CD4-positive, alpha-beta T cell (primary cell): ENCODE measurements at regions of chr1 and their contacts with region 1.

Region 1: GRCh38 chr1:207863893-207864535 is 46.9 kb downstream of the CD34 start:
- DNase-seq: peak in 12 of 14 experiments; percentile 37 to 78 (median 44)
- ATAC-seq: peak; percentile 55
- H3K4me3 ChIP-seq: no peak overlapping the region
- H3K4me3 Mint-ChIP-seq: peak overlapping the region; percentile 95
- H3K27ac ChIP-seq: peak overlapping the region; percentile 13 to 47
- H3K27ac Mint-ChIP-seq: peak overlapping the region; percentile 95
- H3K4me1 ChIP-seq: peaks cover 75% of the 10 kb centered on the region
- H3K4me1 Mint-ChIP-seq: peaks cover 67% of the 10 kb centered on the region
- H3K27me3 ChIP-seq: no peaks in the 10 kb centered on the region
- H3K27me3 Mint-ChIP-seq: no peaks in the 10 kb centered on the region
- CTCF ChIP-seq: no peak

Region 2: GRCh38 chr1:207787776-207788175 is 76.2 kb before region 1 on chr1:
- CTCF ChIA-PET with region 1: no interaction called
- POLR2A ChIA-PET with region 1: no interaction called
- intact Hi-C with region 1: no loop called
- DNase-seq: no peak
- ATAC-seq: no peak
- H3K4me3 ChIP-seq: no peak overlapping the region
- H3K4me3 Mint-ChIP-seq: no peak overlapping the region
- H3K27ac ChIP-seq: no peak overlapping the region
- H3K27ac Mint-ChIP-seq: no peak overlapping the region
- H3K4me1 ChIP-seq: no peaks in the 10 kb centered on the region
- H3K4me1 Mint-ChIP-seq: no peaks in the 10 kb centered on the region
- H3K27me3 ChIP-seq: no peaks in the 10 kb centered on the region
- H3K27me3 Mint-ChIP-seq: no peaks in the 10 kb centered on the region
- CTCF ChIP-seq: no peak

Region 3: GRCh38 chr1:207848234-207848633 is 15.8 kb before region 1 on chr1:
- CTCF ChIA-PET with region 1: interaction called, 21 read pairs
- POLR2A ChIA-PET with region 1: interaction called, 6 read pairs
- intact Hi-C with region 1: loop called in 1 of 2 experiments (anchors 2 kb)
- DNase-seq: peak in 4 of 14 experiments; percentile 49 to 75 (median 62)
- ATAC-seq: peak; percentile 63
- H3K4me3 ChIP-seq: no peak overlapping the region
- H3K4me3 Mint-ChIP-seq: peak overlapping the region; percentile 42
- H3K27ac ChIP-seq: no peak overlapping the region
- H3K27ac Mint-ChIP-seq: peak overlapping the region; percentile 61
- H3K4me1 ChIP-seq: peaks cover 72% of the 10 kb centered on the region
- H3K4me1 Mint-ChIP-seq: peaks cover 96% of the 10 kb centered on the region
- H3K27me3 ChIP-seq: no peaks in the 10 kb centered on the region
- H3K27me3 Mint-ChIP-seq: no peaks in the 10 kb centered on the region
- CTCF ChIP-seq: no peak

Region 4: GRCh38 chr1:207876131-207876530 is 12.1 kb after region 1 on chr1:
- CTCF ChIA-PET with region 1: interaction called, 115 read pairs
- POLR2A ChIA-PET with region 1: interaction called, 102 read pairs
- intact Hi-C with region 1: no loop called
- DNase-seq: no peak
- ATAC-seq: no peak
- H3K4me3 ChIP-seq: no peak overlapping the region
- H3K4me3 Mint-ChIP-seq: no peak overlapping the region
- H3K27ac ChIP-seq: no peak overlapping the region
- H3K27ac Mint-ChIP-seq: peak overlapping the region; percentile 36
- H3K4me1 ChIP-seq: peaks cover 43% of the 10 kb centered on the region
- H3K4me1 Mint-ChIP-seq: peaks cover 58% of the 10 kb centered on the region
- H3K27me3 ChIP-seq: no peaks in the 10 kb centered on the region
- H3K27me3 Mint-ChIP-seq: no peaks in the 10 kb centered on the region
- CTCF ChIP-seq: no peak

Region 5: DNA sequence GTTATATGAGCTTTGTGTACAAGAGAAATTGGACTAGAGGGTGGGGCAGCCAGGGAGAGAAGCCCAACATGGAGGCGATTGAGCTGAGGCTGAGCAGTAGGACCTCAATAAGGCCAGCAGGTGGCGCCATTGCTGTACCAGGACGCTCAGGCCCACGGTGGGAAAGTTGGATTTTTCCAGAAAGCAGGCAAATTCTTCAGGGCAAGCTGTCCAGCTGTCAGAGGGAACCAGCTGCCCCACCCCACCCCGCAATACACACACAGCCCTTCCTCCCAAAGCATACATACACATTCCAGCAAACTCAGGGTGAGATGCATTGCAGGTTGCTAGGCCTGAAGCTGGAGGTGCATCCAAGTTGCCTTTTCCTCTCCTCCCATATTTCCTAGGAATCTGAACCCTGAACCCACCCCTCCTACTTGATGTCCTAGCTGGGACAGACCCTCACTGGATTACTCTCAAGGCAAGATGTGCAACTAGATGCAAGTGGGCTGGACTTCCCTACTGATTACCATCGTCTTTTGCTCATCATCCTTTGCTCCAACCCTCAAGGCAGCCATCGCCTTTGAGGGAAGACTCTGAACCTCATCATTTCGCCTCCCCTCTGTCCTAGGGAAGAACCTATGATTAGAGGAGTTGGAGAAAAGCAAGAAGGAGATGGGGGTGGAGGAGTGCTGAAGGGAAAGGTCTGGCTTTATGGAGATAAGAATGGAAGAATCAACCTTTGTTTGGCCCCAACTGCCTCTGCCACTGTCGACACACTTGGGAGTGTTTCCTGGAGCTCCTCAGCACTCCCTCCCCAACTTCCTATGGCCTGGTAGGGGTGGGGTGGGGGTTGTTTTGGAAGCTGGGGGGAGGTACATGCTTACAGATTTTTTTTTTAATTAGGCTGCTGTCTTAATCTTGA is 21.4 kb after region 1 on chr1:
- CTCF ChIA-PET with region 1: interaction called, 115 read pairs
- POLR2A ChIA-PET with region 1: interaction called, 102 read pairs
- intact Hi-C with region 1: loop called in 1 of 2 experiments (anchors 2 kb)
- DNase-seq: peak; percentile 54 to 89 (median 62)
- ATAC-seq: peak; percentile 78
- H3K4me3 ChIP-seq: no peak overlapping the region
- H3K4me3 Mint-ChIP-seq: peak overlapping the region; percentile 76
- H3K27ac ChIP-seq: no peak overlapping the region
- H3K27ac Mint-ChIP-seq: peak overlapping the region; percentile 92
- H3K4me1 ChIP-seq: peaks cover 32% of the 10 kb centered on the region
- H3K4me1 Mint-ChIP-seq: peaks cover 38% of the 10 kb centered on the region
- H3K27me3 ChIP-seq: no peaks in the 10 kb centered on the region
- H3K27me3 Mint-ChIP-seq: peaks cover 5% of the 10 kb centered on the region
- CTCF ChIP-seq: peak; percentile 98